Upper lobe of right lung (tissue), 1 donor: ENCODE measurements at regions of chr4 and their contacts with region 1.

Region 1: DNA sequence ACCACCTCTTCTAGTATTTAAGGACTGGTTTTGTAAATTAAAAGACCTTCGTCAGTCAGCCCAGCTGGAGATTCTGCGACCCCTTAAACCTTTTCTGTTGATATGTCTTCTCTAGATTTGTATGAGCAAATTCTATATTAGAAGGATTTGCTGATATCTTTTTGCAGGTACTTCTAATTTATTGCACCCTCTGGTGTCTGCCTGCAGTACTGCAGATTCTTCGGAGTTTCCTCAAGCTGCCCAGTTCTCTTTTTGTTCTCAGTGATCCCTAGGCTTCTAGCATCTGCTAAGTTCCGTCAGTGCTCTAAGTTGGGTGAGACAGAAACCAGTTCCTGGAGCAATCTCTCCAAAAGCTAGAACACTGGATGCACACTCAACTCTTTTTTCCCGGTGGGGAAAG is 545.2 kb downstream of the C4orf33 start:
- DNase-seq: no peak
- ATAC-seq: peak; percentile 88
- H3K4me3 ChIP-seq: no peak overlapping the region
- H3K27ac ChIP-seq: no peak overlapping the region
- H3K4me1 ChIP-seq: no peaks in the 10 kb centered on the region
- H3K27me3 ChIP-seq: no peaks in the 10 kb centered on the region
- CTCF ChIP-seq: peak; percentile 82

Region 2: DNA sequence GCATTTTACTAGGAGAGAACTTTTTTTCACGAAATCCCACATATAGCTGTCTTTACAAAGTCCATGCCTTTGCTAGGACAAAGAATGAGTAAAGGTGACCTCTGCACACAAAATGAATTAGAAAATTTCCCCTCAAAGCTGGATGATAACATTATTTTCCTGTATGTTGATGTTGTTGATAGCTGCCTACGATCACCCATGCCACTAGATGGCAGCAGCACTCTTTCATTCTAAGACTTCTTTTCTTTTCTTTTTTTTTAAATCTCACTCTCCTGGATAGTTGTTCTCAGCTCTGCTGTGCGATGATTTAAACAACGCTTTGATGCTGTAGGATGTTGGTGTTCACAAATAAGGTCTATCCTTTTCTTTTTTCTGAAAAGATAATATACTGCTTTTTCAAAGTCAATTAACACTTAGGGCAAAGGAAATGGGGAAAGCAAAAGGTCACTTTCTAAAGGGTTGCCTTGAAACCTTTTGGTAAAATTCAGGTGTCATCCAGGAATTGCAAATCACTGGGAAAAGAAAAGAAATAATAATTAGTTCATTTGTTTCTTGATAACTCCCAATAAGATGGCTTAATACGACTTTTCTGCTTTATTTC is 278.4 kb before region 1 on chr4:
- intact Hi-C with region 1: loop called (anchors 10 kb)
- DNase-seq: no peak
- ATAC-seq: peak; percentile 84
- H3K4me3 ChIP-seq: no peak overlapping the region
- H3K27ac ChIP-seq: no peak overlapping the region
- H3K4me1 ChIP-seq: no peaks in the 10 kb centered on the region
- H3K27me3 ChIP-seq: no peaks in the 10 kb centered on the region
- CTCF ChIP-seq: peak; percentile 91

Region 3: GRCh38 chr4:129929052-129929451 is 287.9 kb after region 1 on chr4:
- intact Hi-C with region 1: no loop called
- DNase-seq: no peak
- ATAC-seq: no peak
- H3K4me3 ChIP-seq: no peak overlapping the region
- H3K27ac ChIP-seq: no peak overlapping the region
- H3K4me1 ChIP-seq: no peaks in the 10 kb centered on the region
- H3K27me3 ChIP-seq: no peaks in the 10 kb centered on the region
- CTCF ChIP-seq: peak; percentile 12